Common myeloid progenitor, CD34-positive (primary cell): ENCODE measurements at regions of chr1 and their contacts with region 1.

Region 1: DNA sequence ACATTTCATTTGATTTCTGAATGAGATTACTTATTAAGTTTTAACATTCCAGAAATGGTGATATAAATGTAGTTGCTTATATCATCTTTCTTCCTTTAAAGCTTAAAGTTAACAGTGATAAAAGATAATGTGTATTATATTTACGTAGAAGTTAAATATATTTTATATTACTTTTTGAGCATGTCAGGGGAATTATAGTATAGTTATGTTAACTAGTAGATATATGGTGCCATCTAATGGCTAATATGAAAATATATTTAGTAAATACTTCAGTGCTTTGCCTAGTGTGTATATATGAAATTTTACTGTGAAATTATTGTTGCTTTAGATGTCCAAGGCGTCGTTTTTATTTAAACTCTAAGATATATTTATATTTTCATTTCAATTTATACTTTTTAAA is 51.5 kb downstream of the SYT14 start:
- DNase-seq: peak; percentile 20 to 47 (median 36)
- H3K4me3 ChIP-seq: no peak overlapping the region
- H3K27ac ChIP-seq: no peak overlapping the region
- H3K4me1 ChIP-seq: no peaks in the 10 kb centered on the region
- H3K27me3 ChIP-seq: peaks cover 0 to 8% (median 2%) of the 10 kb centered on the region in 5 experiments

Region 2: GRCh38 chr1:209860293-209860881 is 129.1 kb before region 1 on chr1:
- CTCF ChIA-PET with region 1: interaction called, 140 read pairs
- POLR2A ChIA-PET with region 1: no interaction called
- DNase-seq: peak; percentile 85 to 92 (median 87)
- H3K4me3 ChIP-seq: no peak overlapping the region
- H3K27ac ChIP-seq: no peak overlapping the region
- H3K4me1 ChIP-seq: peaks cover 0 to 3% (median under 1%) of the 10 kb centered on the region in 4 experiments
- H3K27me3 ChIP-seq: peaks cover 0 to 6% (median 0%) of the 10 kb centered on the region in 5 experiments

Region 3: GRCh38 chr1:209962856-209963255 is 26.7 kb before region 1 on chr1:
- CTCF ChIA-PET with region 1: no interaction called
- POLR2A ChIA-PET with region 1: no interaction called
- DNase-seq: no peak
- H3K4me3 ChIP-seq: no peak overlapping the region
- H3K27ac ChIP-seq: no peak overlapping the region
- H3K4me1 ChIP-seq: no peaks in the 10 kb centered on the region
- H3K27me3 ChIP-seq: peaks cover 0 to 7% (median 0%) of the 10 kb centered on the region in 5 experiments